ENCODE measurements at regions of chr16 and their contacts with region 1.

Region 1: DNA sequence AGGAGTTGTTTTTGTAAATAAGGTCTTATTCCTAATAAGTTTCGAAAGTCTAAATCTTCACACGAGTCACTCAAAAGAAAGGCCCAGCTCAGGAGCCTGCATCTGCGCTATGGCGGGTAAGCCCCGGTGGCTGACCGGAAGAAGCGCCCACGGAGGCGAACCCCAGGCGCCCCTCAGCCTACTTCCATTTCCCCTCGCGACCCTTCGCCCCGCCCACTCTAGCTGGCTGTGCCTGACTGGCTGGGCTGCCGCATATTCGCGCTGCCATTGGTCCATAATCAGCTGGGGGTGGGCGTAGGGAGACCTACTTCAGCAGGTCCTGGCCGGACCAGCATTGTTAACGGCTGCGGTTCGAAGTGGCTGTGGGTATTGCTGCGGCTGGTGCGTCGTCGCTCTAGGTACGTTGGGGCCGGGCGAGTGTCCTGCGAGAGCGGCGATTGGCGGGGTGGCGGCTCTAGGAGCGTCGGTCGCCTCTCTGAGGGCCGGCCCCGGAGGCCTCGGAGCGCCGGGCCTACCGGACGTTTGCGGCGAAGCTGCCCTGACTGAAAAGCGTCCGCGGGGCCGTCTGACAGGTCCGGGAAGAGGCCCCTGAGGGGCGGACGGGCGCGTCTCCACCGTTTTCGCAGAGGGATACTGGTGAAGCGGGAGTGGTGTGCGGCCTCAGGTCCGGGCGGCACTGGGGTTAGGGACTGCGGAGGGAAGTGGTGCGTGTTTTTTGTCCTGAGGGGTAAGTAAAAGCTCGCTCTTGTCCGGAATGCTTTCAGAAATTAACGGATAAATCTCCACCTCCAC is at the start of gene ATF7IP2:
- DNase-seq: peak; percentile 81 to 89 (median 84)
- H3K4me3 ChIP-seq: peak within 1 kb of the TSS; percentile 63 to 76
- H3K4me3 Mint-ChIP-seq: peak within 1 kb of the TSS; percentile 92 to 99 (median 96)
- H3K27ac ChIP-seq: peak within 1 kb of the TSS; percentile 61
- H3K27ac Mint-ChIP-seq: peak within 1 kb of the TSS; percentile 90 to 98 (median 97)
- H3K4me1 ChIP-seq: peaks cover 42% of the 10 kb centered on the region
- H3K4me1 Mint-ChIP-seq: peaks cover 28 to 58% (median 41%) of the 10 kb centered on the region in 4 donors
- H3K27me3 ChIP-seq: no peaks in the 10 kb centered on the region
- H3K27me3 Mint-ChIP-seq: no peaks in the 10 kb centered on the region
- total RNA-seq, gene ATF7IP2: 51.1 to 58.0 TPM

Region 2: DNA sequence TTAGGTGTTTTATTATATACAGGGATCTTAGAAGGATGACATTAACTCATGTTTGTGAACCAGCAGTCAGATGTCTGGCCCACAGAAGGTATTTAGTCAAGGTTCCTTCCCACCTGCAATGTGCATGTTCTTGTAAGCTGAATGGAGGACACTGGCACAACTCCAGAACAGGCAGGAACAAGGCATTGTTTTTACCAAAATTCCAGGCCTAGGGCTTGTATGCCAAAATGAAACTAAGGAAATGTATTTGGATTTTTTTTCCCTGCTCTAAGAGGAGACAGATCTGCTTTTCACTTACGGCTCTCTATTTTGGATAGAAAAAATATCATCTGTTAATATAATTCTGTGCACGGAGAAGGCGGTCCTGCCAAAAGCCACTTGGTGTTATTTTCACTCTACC is 516.1 kb before region 1 on chr16:
- CTCF ChIA-PET with region 1: no interaction called
- POLR2A ChIA-PET with region 1: no interaction called
- intact Hi-C with region 1: no loop called
- DNase-seq: no peak
- H3K4me3 ChIP-seq: no peak overlapping the region
- H3K4me3 Mint-ChIP-seq: no peak overlapping the region
- H3K27ac ChIP-seq: no peak overlapping the region
- H3K27ac Mint-ChIP-seq: no peak overlapping the region
- H3K4me1 ChIP-seq: no peaks in the 10 kb centered on the region
- H3K4me1 Mint-ChIP-seq: no peaks in the 10 kb centered on the region
- H3K27me3 ChIP-seq: no peaks in the 10 kb centered on the region
- H3K27me3 Mint-ChIP-seq: peaks cover 2 to 3% of the 10 kb centered on the region in 2 donors

Region 3: DNA sequence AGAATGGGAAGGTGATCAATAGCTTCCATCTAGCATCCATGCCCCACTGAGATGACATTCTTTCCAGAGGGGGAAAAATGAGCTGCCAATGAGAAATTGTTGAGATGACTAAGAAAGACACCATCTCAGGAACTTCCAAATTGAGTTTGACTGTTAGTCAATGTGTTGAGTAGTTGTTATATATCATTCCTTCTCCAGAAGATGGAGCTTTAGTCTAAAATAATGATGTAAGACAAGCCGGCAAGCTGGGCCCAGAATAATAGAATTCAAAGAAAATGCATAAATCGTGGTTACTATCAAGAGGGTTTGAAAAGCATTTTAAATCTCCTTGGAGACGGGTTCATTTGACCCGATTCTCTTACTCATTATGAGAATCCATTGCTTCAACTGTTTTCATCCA is 71.1 kb before region 1 on chr16:
- CTCF ChIA-PET with region 1: interaction called, 5 read pairs
- POLR2A ChIA-PET with region 1: interaction called, 11 read pairs
- intact Hi-C with region 1: loop called (anchors 2 kb)
- DNase-seq: peak in 4 of 5 donors; percentile 37 to 57 (median 46)
- H3K4me3 ChIP-seq: no peak overlapping the region
- H3K4me3 Mint-ChIP-seq: no peak overlapping the region
- H3K27ac ChIP-seq: no peak overlapping the region
- H3K27ac Mint-ChIP-seq: peak overlapping the region in 1 of 7 donors; percentile 65
- H3K4me1 ChIP-seq: peaks cover 8% of the 10 kb centered on the region
- H3K4me1 Mint-ChIP-seq: peaks cover 14 to 29% (median 20%) of the 10 kb centered on the region in 4 donors
- H3K27me3 ChIP-seq: no peaks in the 10 kb centered on the region
- H3K27me3 Mint-ChIP-seq: no peaks in the 10 kb centered on the region

Region 4: DNA sequence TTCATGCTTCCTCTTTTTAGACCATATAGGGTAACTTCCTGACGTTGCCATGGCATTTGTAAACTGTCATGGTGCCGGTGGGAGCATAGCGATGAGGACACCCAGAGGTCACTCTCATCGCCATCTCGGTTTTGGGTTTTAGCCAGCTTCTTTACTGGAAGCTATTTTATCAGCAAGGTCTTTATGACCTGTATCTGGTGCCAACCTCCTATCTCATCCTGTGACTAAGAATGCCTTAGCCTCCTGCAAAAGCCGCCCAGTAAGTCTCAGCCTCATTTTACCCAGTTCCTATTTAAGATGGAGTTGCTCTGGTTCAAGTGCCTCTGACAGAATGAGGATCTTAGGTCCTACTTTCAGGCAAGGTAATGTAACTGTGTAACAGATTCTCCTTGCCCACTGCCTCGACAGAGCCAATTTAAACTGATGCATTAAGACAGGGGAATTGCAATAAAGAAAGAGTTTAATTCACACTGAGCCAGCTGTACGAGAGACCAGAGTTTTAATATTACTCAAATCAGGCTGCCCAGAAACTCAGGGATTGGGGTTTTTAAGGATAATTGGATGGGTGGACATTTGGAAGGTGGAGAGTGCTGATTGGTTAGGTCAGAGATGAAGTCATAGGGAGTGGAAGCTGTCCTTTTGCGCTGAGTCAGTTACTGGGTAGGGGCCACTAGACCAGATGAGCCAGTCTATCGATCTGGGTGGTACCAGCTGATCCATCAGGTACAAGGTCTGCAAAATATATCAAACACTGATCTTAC is 60.0 kb before region 1 on chr16:
- CTCF ChIA-PET with region 1: interaction called, 3 read pairs
- POLR2A ChIA-PET with region 1: interaction called, 10 read pairs
- intact Hi-C with region 1: loop called (anchors 2 kb)
- DNase-seq: no peak
- H3K4me3 ChIP-seq: no peak overlapping the region
- H3K4me3 Mint-ChIP-seq: peak overlapping the region in 1 of 8 donors; percentile 20
- H3K27ac ChIP-seq: no peak overlapping the region
- H3K27ac Mint-ChIP-seq: no peak overlapping the region
- H3K4me1 ChIP-seq: peaks cover 16% of the 10 kb centered on the region
- H3K4me1 Mint-ChIP-seq: peaks cover 12 to 25% (median 19%) of the 10 kb centered on the region in 4 donors
- H3K27me3 ChIP-seq: no peaks in the 10 kb centered on the region
- H3K27me3 Mint-ChIP-seq: no peaks in the 10 kb centered on the region

Region 5: DNA sequence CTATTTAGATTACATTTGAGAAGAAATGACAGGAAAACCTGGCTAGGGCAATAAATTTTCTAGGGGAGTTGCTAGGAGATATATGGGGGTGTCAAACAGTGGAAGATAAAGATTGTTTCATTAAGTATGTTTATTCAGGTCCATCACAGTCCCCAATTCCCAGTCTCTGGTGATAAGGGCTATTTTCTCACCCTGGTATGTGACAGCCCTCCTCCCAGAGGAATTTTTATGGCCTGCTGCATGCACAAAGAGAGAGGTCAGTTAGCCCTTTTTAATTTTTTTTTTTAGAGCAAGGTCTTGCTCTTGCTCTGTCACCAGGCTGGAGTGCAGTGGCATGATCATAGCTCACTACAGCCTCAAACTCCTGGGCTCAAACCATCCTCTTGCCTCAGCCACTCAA is 53.7 kb before region 1 on chr16:
- CTCF ChIA-PET with region 1: interaction called, 3 read pairs
- POLR2A ChIA-PET with region 1: interaction called, 10 read pairs
- intact Hi-C with region 1: loop called (anchors 2 kb)
- DNase-seq: no peak
- H3K4me3 ChIP-seq: peak overlapping the region in 1 of 2 donors; percentile 32
- H3K4me3 Mint-ChIP-seq: peak overlapping the region in 6 of 8 donors; percentile 17 to 77 (median 60)
- H3K27ac ChIP-seq: no peak overlapping the region
- H3K27ac Mint-ChIP-seq: peak overlapping the region; percentile 46 to 83 (median 56)
- H3K4me1 ChIP-seq: peaks cover 60% of the 10 kb centered on the region
- H3K4me1 Mint-ChIP-seq: peaks cover 30 to 53% (median 39%) of the 10 kb centered on the region in 4 donors
- H3K27me3 ChIP-seq: no peaks in the 10 kb centered on the region
- H3K27me3 Mint-ChIP-seq: no peaks in the 10 kb centered on the region

Region 6: DNA sequence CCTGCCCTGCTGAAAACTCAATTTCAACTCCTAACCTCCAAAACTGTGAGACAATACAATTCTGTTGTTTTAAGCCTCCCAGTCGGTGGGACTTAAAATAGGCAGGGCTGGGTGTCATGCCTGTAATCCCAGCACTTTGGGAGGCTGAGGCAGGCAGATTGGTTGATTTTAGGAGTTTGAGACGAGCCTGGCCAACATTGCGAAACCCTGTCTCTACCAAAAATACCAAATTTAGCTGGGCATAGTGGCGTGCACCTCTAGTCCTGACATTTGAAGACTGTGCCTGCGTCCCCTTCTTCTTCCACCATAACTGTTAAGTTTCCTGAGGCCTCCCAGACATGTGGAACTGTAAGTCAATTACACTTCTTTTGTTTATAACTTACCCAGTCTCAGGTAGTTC is 36.1 kb before region 1 on chr16:
- CTCF ChIA-PET with region 1: no interaction called
- POLR2A ChIA-PET with region 1: no interaction called
- intact Hi-C with region 1: no loop called
- DNase-seq: no peak
- H3K4me3 ChIP-seq: no peak overlapping the region
- H3K4me3 Mint-ChIP-seq: no peak overlapping the region
- H3K27ac ChIP-seq: no peak overlapping the region
- H3K27ac Mint-ChIP-seq: peak overlapping the region in 1 of 7 donors; percentile 57
- H3K4me1 ChIP-seq: no peaks in the 10 kb centered on the region
- H3K4me1 Mint-ChIP-seq: no peaks in the 10 kb centered on the region
- H3K27me3 ChIP-seq: no peaks in the 10 kb centered on the region
- H3K27me3 Mint-ChIP-seq: no peaks in the 10 kb centered on the region

Region 7: GRCh38 chr16:10362077-10362863 is 23.7 kb before region 1 on chr16:
- CTCF ChIA-PET with region 1: no interaction called
- POLR2A ChIA-PET with region 1: interaction called, 17 read pairs
- intact Hi-C with region 1: no loop called
- DNase-seq: peak in 4 of 5 donors; percentile 4 to 33 (median 18)
- H3K4me3 ChIP-seq: no peak overlapping the region
- H3K4me3 Mint-ChIP-seq: peak overlapping the region; percentile 57 to 85 (median 67)
- H3K27ac ChIP-seq: no peak overlapping the region
- H3K27ac Mint-ChIP-seq: peak overlapping the region; percentile 2 to 93 (median 80)
- H3K4me1 ChIP-seq: peaks cover 19% of the 10 kb centered on the region
- H3K4me1 Mint-ChIP-seq: peaks cover 9 to 20% (median 13%) of the 10 kb centered on the region in 4 donors
- H3K27me3 ChIP-seq: no peaks in the 10 kb centered on the region
- H3K27me3 Mint-ChIP-seq: no peaks in the 10 kb centered on the region

Region 8: DNA sequence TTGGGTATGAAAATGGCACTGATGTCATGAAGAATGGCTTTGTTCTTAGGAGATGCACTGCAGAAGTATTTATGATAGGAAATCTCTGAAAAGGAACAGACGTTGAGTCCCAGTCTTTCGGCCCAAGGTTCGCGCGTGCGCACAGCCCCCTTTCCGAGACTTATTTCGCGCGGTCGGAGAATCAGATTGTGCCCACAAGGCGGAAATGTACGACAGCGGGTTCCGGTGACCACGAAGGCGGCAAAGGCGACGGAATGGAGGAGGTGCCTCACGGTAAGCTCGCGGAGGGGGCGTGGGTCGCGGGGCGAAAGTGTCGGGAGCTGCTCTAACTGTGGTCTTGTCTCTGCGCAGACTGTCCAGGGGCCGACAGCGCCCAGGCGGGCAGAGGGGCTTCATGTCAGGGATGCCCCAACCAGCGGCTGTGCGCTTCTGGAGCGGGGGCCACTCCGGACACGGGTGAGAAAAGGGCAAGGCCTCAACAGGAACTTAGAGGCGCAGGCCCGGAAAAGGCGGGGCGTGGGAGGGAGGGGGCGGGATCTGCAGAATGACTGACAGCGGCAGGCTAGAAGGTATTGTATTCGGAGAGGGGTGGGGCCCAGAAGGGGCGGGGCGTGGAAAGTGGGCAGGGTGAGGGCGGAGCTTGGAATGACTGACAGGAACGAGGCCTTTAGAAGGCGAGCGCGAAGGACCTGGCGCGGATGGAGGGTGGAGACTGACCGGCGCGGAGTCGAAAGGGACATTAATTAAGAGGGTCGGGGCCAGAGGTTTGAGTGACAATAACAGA is 357.9 kb after region 1 on chr16 and contains the start of gene NUBP1:
- CTCF ChIA-PET with region 1: no interaction called
- POLR2A ChIA-PET with region 1: interaction called, 10 read pairs
- intact Hi-C with region 1: no loop called
- DNase-seq: peak; percentile 98 to 100 (median 98)
- H3K4me3 ChIP-seq: peak within 1 kb of the TSS; percentile 63 to 81
- H3K4me3 Mint-ChIP-seq: peak within 1 kb of the TSS; percentile 90 to 97 (median 95)
- H3K27ac ChIP-seq: peak within 1 kb of the TSS; percentile 92
- H3K27ac Mint-ChIP-seq: peak within 1 kb of the TSS; percentile 93 to 100 (median 99)
- H3K4me1 ChIP-seq: peaks cover 19% of the 10 kb centered on the region
- H3K4me1 Mint-ChIP-seq: peaks cover 16 to 30% (median 24%) of the 10 kb centered on the region in 4 donors
- H3K27me3 ChIP-seq: no peaks in the 10 kb centered on the region
- H3K27me3 Mint-ChIP-seq: no peaks in the 10 kb centered on the region
- total RNA-seq, gene NUBP1: 23.5 to 28.4 TPM